Left lung (tissue), 14 donors: ENCODE measurements at regions of chr11 and their contacts with region 1.

Region 1: GRCh38 chr11:65700391-65700790 is 11.7 kb upstream of the KAT5 start:
- DNase-seq: no peak
- ATAC-seq: no peak
- H3K4me3 ChIP-seq: no peak overlapping the region
- H3K27ac ChIP-seq: no peak overlapping the region
- H3K4me1 ChIP-seq: peaks cover 0 to 4% of the 10 kb centered on the region in 2 donors
- H3K27me3 ChIP-seq: peaks cover 0 to 3% of the 10 kb centered on the region in 2 donors
- CTCF ChIP-seq: no peak

Region 2: GRCh38 chr11:65169164-65169641 is 531.2 kb before region 1 on chr11:
- intact Hi-C with region 1: no loop called
- DNase-seq: no peak
- ATAC-seq: no peak
- H3K4me3 ChIP-seq: no peak overlapping the region
- H3K27ac ChIP-seq: no peak overlapping the region
- H3K4me1 ChIP-seq: no peaks in the 10 kb centered on the region
- H3K27me3 ChIP-seq: no peaks in the 10 kb centered on the region
- CTCF ChIP-seq: no peak

Region 3: GRCh38 chr11:65625628-65626342 is 74.6 kb before region 1 on chr11:
- intact Hi-C with region 1: loop called in 1 of 2 experiments (anchors 10 kb)
- DNase-seq: peak in 3 of 4 donors; percentile 67 to 93 (median 70)
- ATAC-seq: peak; percentile 85
- H3K4me3 ChIP-seq: no peak overlapping the region
- H3K27ac ChIP-seq: no peak overlapping the region
- H3K4me1 ChIP-seq: peaks cover 0 to 7% of the 10 kb centered on the region in 2 donors
- H3K27me3 ChIP-seq: no peaks in the 10 kb centered on the region
- CTCF ChIP-seq: peak; percentile 67 to 85